A549 (cell line): ENCODE measurements at regions of chr5 and their contacts with region 1.

Region 1: DNA sequence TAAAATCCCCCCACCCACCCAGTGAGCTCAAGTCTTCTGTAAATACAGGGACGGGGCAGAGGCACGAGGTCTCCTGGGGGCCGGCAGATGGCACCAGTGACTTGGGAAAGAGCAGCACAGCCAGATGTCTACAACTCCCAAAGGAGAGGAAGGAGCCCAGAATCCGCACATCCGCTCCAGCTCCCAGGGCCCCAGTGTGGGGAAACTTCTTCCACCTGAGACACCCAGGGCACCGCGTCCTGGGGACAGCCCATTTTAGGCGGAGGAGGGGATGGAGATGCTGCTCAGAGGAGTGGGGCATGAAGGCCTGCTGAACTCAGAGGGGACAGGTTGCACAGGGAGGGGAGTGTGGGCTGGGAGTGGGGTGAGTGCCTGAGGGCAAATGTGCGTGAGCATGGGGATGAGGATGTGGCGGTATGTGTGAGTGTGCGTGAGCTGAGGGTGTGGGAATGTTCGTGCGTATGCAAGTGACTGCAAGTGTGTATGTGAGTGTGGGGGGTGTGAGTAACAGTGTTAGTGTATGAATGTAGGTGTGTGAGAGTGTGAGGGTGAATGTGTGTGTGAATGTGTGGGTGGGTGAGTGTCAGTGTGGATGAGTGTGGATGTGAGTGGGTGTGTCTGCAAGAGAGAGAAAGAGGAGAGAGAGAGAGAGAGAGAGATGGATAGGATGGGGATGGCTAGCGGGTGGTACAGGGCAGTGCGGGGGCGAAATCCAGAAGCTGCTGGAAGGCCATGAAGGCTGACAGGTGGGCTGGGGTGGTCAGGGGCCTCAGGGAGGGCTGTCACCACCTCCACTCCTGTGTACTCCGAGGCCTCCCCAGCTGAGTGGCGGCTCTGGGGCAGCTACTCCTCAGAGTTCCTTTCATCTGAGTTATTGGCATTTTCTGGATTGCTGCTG is 63.5 kb downstream of the DUSP1 start:
- DNase-seq: peak; percentile 66 to 84
- ATAC-seq: peak; percentile 98 to 99
- H3K4me3 ChIP-seq: peak overlapping the region; percentile 33
- H3K27ac ChIP-seq: peak overlapping the region; percentile 80 to 83
- H3K4me1 ChIP-seq: peaks cover 11% of the 10 kb centered on the region
- CTCF ChIP-seq: peak; percentile 87
- EP300 ChIP-seq: no peak
- POLR2A ChIP-seq: no peak
- RAD21 ChIP-seq: peak; percentile 96 to 97

Region 2: DNA sequence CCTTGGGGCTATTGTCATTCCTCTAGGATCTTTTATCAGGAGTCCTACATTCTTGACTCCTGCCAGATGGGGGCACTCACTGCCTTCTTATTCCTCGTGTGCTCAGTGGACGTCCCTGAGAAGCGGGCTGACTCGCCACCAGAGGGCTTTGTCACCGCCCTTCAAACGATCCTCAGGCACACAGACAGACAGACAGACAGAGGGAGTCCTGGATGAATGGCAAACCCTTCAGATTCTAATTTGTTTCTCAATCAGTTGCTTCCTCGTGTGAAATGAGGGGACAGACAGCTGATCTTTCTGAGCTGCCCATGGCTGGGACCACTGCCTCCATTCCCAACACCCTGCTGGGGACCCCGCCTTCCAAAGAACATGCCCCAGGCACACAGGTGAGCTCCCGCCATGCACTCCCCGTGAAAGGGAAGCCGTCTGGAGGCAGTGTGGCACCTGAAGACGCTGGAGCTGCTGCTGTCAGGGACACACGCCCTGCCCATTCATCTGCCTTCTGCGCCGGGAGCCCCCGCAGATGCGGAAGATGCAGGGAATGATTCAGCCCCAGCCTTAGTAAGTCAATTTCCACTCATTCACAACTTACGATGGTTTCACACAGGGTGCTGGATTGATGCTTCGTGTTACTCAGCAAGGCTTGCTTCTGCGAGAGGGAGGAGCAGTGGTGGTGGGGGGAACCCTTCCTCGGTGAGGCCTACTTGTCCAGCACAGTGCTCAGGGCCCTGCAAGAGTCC is 228.3 kb before region 1 on chr5:
- CTCF ChIA-PET with region 1: interaction called, 21 read pairs
- POLR2A ChIA-PET with region 1: no interaction called
- DNase-seq: peak; percentile 92
- ATAC-seq: peak; percentile 94 to 99
- H3K4me3 ChIP-seq: no peak overlapping the region
- H3K27ac ChIP-seq: no peak overlapping the region; a peak in 1 of 6 replicates
- H3K4me1 ChIP-seq: no peaks in the 10 kb centered on the region
- CTCF ChIP-seq: peak; percentile 96
- EP300 ChIP-seq: no peak
- POLR2A ChIP-seq: no peak
- RAD21 ChIP-seq: peak; percentile 96 to 97

Region 3: DNA sequence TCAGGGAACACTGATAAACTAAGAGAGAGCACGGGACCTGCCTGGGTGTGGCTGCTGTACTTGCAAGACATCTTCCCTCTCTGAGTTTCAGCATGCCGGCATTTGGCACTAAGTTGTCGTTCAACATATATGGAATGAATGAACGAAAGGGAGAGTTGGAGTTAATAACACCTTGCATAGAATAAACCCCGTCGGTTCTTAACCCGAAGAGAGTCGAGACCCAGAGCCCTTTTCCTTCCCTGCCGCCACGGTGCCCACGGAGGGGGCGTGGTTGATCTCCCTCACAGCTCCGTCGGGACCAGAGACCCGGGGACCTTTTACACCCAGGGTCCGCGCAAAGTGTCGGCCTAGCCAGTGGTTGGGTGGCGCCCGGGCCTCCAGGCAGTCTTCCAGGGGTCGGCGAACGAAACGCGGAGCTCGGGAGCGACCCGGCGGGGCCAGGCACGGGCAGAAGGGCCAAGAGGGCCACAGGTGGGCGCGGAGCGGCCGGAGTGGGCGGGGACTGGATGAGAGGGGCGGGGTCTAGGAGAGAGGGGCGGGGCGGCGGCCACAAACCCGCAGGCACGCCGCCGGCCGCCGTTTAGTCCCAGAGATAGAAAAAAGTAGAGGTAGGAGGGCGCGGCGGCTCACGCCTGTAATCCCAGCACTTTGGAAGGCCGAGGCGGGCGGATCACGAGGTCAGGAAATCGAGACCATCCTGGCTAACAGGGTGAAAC is 251.0 kb after region 1 on chr5:
- CTCF ChIA-PET with region 1: interaction called, 16 read pairs
- POLR2A ChIA-PET with region 1: interaction called, 3 read pairs
- DNase-seq: peak; percentile 66 to 84
- ATAC-seq: peak; percentile 77 to 78
- H3K4me3 ChIP-seq: peak overlapping the region; percentile 65
- H3K27ac ChIP-seq: peak overlapping the region; percentile 94 to 95
- H3K4me1 ChIP-seq: peaks cover 57% of the 10 kb centered on the region
- CTCF ChIP-seq: no peak
- EP300 ChIP-seq: no peak
- POLR2A ChIP-seq: no peak
- RAD21 ChIP-seq: no peak; a peak in 1 of 5 replicates

Region 4: GRCh38 chr5:173163219-173163618 is 455.7 kb after region 1 on chr5:
- CTCF ChIA-PET with region 1: interaction called, 10 read pairs
- POLR2A ChIA-PET with region 1: no interaction called
- DNase-seq: no peak
- ATAC-seq: peak; percentile 40 to 43; a peak in 2 of 6 replicates
- H3K4me3 ChIP-seq: no peak overlapping the region
- H3K27ac ChIP-seq: no peak overlapping the region
- H3K4me1 ChIP-seq: no peaks in the 10 kb centered on the region
- CTCF ChIP-seq: no peak
- EP300 ChIP-seq: no peak
- POLR2A ChIP-seq: no peak
- RAD21 ChIP-seq: no peak

Region 5: DNA sequence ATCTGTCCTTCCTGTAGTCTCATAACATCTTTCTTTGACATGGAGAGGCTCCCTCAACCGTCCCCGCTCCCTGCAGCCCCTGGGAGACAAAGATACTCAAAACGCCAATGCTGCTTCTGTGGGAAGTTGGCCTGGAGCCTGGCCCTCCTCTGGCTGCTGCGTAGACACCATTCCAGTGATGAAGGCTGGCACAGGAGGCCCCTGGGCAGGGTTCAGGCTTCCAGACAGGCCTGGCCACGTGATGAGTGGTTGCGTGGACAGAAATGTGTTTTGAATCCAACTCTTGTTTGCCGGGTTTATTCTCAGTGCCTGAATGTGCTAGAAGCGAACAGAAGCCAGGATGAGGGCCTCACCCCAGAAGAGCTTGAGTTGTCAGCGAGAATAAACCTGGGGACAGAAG is 570.6 kb after region 1 on chr5:
- CTCF ChIA-PET with region 1: interaction called, 11 read pairs
- POLR2A ChIA-PET with region 1: no interaction called
- DNase-seq: no peak
- ATAC-seq: no peak
- H3K4me3 ChIP-seq: no peak overlapping the region
- H3K27ac ChIP-seq: no peak overlapping the region
- H3K4me1 ChIP-seq: 0 out of 3 replicates have a peak, but pooled peaks cover 6% of the 10 kb centered on the region
- CTCF ChIP-seq: no peak
- EP300 ChIP-seq: no peak
- POLR2A ChIP-seq: no peak
- RAD21 ChIP-seq: no peak

Region 6: DNA sequence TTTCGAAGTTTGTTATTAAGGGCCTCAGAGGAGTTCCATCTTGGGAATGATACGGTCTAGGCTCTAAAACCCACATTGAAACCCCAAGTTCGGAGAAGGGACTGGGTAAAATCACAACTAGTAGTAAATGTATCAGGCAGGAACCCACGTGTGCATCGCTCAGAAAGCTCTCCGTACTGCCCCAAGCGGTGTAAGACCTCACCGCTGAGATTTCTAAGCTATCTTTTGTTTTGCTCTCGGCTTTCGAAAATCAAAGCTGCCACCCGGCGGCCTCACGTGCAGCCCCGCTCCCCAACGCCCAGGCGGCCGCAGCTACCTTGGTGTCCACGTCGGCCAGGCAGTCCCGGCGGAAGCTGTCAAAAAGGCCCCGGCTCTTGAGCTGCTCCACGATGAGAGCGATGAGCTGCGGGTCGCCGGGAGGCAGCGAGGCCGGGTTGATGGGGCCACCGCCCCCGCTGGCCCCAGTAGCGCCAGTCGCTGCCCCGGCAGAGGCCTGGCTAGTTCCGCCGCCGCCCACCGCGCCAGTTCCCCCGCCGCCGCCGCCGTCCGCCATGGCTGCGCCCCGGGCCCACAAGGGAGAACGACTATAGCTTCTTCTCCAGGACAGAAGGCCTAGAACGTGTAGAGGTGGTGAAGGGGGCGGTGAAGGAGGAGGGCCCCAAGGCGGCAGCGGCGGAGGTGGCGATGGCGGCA is 908.5 kb after region 1 on chr5:
- CTCF ChIA-PET with region 1: interaction called, 13 read pairs
- POLR2A ChIA-PET with region 1: no interaction called
- DNase-seq: peak; percentile 72 to 80
- ATAC-seq: peak; percentile 79 to 80
- H3K4me3 ChIP-seq: peak overlapping the region; percentile 88
- H3K27ac ChIP-seq: peak overlapping the region; percentile 92 to 98
- H3K4me1 ChIP-seq: peaks cover 40% of the 10 kb centered on the region
- CTCF ChIP-seq: peak; percentile 53
- EP300 ChIP-seq: no peak
- POLR2A ChIP-seq: no peak; the same call in 1 of the 2 replicates
- RAD21 ChIP-seq: peak in 1 of 2 experiments; percentile 37; a peak in 3 of 5 replicates